K562 (cell line): ENCODE measurements at regions of chr1 and their contacts with region 1.

Region 1: DNA sequence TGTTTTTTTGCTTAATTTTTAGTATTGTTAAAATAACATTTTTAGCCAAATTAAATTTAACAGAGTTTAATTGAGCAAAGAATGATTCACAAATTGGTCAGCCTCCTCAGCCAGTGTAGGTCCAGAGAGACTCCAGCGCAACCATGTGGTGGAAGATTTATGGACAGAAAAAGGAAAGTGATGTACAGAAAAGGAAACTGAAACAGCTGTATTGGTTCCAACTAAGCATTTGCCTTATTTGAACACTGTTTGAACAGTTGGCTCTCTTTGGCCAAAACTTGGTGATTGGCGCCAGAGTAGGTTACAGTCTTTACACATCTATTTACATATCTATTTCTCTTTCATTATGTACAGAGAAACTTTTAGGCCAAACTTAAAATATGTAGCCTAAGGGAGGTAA is 19.4 kb downstream of the RPS6KC1 start:
- DNase-seq: peak in 2 of 4 experiments; percentile 49 to 75
- ATAC-seq: peak; percentile 85
- H3K4me3 ChIP-seq: no peak overlapping the region
- H3K27ac ChIP-seq: no peak overlapping the region
- H3K4me1 ChIP-seq: peaks cover 3 to 30% of the 10 kb centered on the region in 2 experiments; a peak in 3 of 5 replicates
- H3K27me3 ChIP-seq: no peaks in the 10 kb centered on the region
- CTCF ChIP-seq: peak; percentile 53 to 75 (median 59)
- EP300 ChIP-seq: no peak
- POLR2A ChIP-seq: no peak
- RAD21 ChIP-seq: peak; percentile 87 to 92

Region 2: DNA sequence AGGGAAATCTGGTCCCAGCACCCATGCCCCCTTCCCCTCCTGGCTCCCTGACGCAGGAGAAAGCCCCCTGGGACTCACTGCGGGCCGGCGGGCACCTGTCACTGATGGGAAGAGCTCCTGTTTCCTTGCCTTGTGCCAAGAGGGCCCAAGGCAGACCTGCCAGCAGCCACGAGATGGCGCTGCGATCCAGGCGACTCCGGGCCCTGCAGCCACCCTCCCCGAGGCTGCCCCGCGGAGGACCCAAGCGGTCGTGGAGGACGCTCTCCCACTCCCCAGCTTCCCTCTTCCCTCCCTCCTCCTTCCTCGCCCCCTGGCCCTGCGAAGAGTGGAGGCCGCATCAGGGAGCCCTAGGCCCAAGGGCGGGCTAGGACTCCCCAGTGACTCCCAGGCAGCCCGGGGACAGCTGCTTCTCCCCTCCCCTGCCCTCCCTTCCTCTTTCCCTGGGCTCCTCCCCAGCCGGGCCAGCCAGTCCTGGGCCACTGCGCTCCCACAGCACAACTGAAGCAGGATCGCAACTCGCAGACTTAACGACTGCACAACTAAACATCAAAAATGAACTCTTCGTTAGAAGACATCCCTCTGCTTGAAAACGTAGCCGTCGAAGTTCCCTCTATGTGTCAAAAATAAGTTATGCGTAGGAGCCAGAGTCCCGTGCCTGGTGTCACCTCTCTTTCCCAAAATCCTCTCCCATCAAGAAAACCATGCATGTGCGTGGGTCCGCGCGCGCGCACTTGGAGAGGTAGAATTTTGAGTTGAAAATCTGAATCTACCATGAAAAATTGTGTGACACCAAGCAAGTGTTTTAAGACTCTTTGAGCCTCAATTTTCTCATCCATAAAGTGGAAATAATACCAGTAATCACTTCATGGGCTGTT is 404.9 kb before region 1 on chr1:
- CTCF ChIA-PET with region 1: no interaction called
- POLR2A ChIA-PET with region 1: no interaction called
- in situ Hi-C with region 1: no loop called
- intact Hi-C with region 1: loop called (anchors 5 kb)
- DNase-seq: peak; percentile 85 to 88 (median 86)
- ATAC-seq: peak; percentile 99
- H3K4me3 ChIP-seq: peak overlapping the region; percentile 40
- H3K27ac ChIP-seq: no peak overlapping the region
- H3K4me1 ChIP-seq: peaks cover 3 to 11% of the 10 kb centered on the region in 2 experiments; a peak in 4 of 5 replicates
- H3K27me3 ChIP-seq: peaks cover 13 to 35% of the 10 kb centered on the region in 2 experiments; a peak in 4 of 5 replicates
- CTCF ChIP-seq: peak; percentile 94 to 95 (median 95)
- EP300 ChIP-seq: no peak
- POLR2A ChIP-seq: no peak
- RAD21 ChIP-seq: peak; percentile 97 to 98

Region 3: DNA sequence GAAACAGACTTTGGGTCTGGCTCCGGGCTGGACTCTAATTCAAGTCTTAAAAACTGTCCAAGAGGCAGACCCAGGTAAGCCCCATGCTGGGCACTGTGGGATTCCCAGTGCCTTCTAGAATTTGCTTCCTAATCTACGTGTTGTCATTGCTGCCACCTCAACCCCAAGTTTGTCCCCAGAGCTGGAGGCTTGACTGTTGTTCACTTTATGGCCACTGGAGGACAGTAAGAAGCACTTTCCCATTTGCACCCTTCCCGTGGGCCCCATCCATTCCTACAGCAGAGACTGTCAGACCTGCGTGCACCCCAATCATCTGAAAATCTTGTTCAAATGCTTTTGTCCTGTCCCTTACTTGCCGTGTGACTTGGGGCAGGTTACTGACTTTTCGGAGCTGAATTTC is 149.5 kb before region 1 on chr1:
- CTCF ChIA-PET with region 1: interaction called, 7 read pairs
- POLR2A ChIA-PET with region 1: no interaction called
- in situ Hi-C with region 1: no loop called
- intact Hi-C with region 1: loop called (anchors 1 kb)
- DNase-seq: peak; percentile 53 to 75 (median 72)
- ATAC-seq: peak; percentile 79
- H3K4me3 ChIP-seq: no peak overlapping the region
- H3K27ac ChIP-seq: no peak overlapping the region
- H3K4me1 ChIP-seq: peaks cover 7% of the 10 kb centered on the region in 2 experiments; a peak in 3 of 5 replicates
- H3K27me3 ChIP-seq: peaks cover 15 to 52% of the 10 kb centered on the region in 2 experiments
- CTCF ChIP-seq: peak; percentile 77 to 88 (median 84)
- EP300 ChIP-seq: no peak
- POLR2A ChIP-seq: no peak
- RAD21 ChIP-seq: peak; percentile 64 to 86

Region 4: DNA sequence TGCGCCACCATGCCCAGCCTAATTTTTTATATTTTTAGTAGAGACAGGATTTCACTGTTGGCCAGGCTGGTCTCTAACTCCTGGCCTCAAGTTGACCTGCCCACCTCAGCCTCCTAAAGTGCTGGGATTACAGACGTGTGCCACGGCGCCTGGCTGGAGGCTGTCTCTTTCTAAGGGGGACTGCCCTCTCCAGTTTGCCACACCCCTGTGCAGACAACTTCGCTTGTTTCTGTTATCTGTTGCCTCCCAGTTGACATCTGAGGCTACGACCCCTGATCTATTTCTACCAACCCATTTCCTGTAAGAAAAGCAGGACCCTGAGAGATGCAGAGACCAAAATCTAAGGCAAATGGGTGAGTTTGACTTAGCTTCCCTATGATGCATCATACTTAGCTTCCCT is 144.0 kb before region 1 on chr1:
- CTCF ChIA-PET with region 1: interaction called, 7 read pairs
- POLR2A ChIA-PET with region 1: no interaction called
- in situ Hi-C with region 1: no loop called
- intact Hi-C with region 1: loop called (anchors 1 kb)
- DNase-seq: peak in 1 of 4 experiments; percentile 29
- ATAC-seq: peak; percentile 47
- H3K4me3 ChIP-seq: no peak overlapping the region
- H3K27ac ChIP-seq: no peak overlapping the region
- H3K4me1 ChIP-seq: no peaks in the 10 kb centered on the region; a peak in 1 of 5 replicates
- H3K27me3 ChIP-seq: peaks cover 11 to 26% of the 10 kb centered on the region in 2 experiments
- CTCF ChIP-seq: no peak
- EP300 ChIP-seq: no peak
- POLR2A ChIP-seq: no peak
- RAD21 ChIP-seq: no peak

Region 5: GRCh38 chr1:212994926-212995325 is 75.5 kb before region 1 on chr1:
- CTCF ChIA-PET with region 1: no interaction called
- POLR2A ChIA-PET with region 1: no interaction called
- in situ Hi-C with region 1: no loop called
- intact Hi-C with region 1: loop called (anchors 1 kb)
- DNase-seq: no peak
- ATAC-seq: no peak
- H3K4me3 ChIP-seq: no peak overlapping the region
- H3K27ac ChIP-seq: no peak overlapping the region
- H3K4me1 ChIP-seq: no peaks in the 10 kb centered on the region
- H3K27me3 ChIP-seq: no peaks in the 10 kb centered on the region
- CTCF ChIP-seq: no peak
- EP300 ChIP-seq: no peak
- POLR2A ChIP-seq: no peak
- RAD21 ChIP-seq: no peak

Region 6: DNA sequence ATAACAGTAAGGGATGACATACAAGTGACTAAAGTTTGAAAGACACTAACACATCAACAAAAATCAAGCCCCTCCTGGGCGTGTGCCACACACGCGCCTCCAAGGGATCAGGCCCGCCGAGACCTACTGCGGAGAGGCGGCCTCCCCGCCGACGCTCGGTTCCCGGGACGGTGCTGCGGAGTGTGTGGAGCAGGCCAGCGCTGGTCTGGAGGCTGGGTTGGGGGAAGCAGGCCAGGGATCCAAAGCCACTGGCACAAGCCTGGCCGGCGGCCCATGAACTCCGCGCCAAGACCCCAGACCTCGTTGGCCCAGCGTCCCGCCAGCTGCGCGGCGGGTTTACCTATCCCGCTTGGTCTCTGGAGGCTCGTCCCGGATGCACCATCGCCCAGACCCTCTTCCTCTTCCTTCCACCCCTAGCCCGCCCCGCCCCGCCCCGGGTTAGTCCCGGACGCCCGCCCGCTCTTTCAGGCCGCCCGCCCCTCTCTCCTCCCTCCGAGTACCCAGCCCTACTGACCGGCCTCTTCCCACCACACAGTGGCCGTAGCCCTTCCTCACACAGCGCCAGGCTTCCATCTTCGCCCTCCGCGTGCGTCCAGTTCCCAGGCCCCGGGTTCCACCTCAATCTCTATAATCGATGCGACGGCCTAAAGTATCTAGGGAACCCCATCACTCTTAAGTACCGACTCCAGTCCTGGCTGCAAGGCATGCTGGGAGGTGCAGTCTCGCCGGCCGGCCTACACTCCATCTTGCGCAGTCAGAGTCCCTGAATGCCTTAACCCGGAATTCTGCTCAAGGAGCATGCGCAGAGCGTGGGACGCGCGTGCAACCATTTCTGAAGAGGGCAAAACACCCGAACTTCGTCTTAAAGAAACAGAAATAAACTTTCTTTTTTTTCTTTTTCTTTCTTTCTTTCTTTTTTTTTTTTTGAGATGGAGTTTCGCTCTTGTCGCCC is 55.0 kb before region 1 on chr1 and contains the start of gene ANGEL2:
- CTCF ChIA-PET with region 1: no interaction called
- POLR2A ChIA-PET with region 1: interaction called, 4 read pairs
- in situ Hi-C with region 1: no loop called
- intact Hi-C with region 1: loop called (anchors 1 kb)
- DNase-seq: peak; percentile 91 to 100 (median 94)
- ATAC-seq: peak; percentile 91
- H3K4me3 ChIP-seq: peak within 1 kb of the TSS; percentile 72
- H3K27ac ChIP-seq: peak within 1 kb of the TSS; percentile 65
- H3K4me1 ChIP-seq: peaks cover 15 to 22% of the 10 kb centered on the region in 2 experiments
- H3K27me3 ChIP-seq: no peaks in the 10 kb centered on the region
- CTCF ChIP-seq: no peak
- EP300 ChIP-seq: peak; percentile 22; the same call in 1 of the 2 replicates
- POLR2A ChIP-seq: peak; percentile 85
- RAD21 ChIP-seq: no peak
- polyA plus RNA-seq, gene ANGEL2: 6.8 to 10.9 TPM

Region 7: GRCh38 chr1:213051127-213051880 is 19.1 kb before region 1 on chr1 and contains the start of gene RPS6KC1:
- CTCF ChIA-PET with region 1: no interaction called
- POLR2A ChIA-PET with region 1: interaction called, 16 read pairs
- in situ Hi-C with region 1: no loop called
- intact Hi-C with region 1: loop called (anchors 2 kb)
- DNase-seq: peak; percentile 92 to 97 (median 93)
- ATAC-seq: peak; percentile 89
- H3K4me3 ChIP-seq: peak within 1 kb of the TSS; percentile 76
- H3K27ac ChIP-seq: peak within 1 kb of the TSS; percentile 92
- H3K4me1 ChIP-seq: peaks cover 33 to 71% of the 10 kb centered on the region in 2 experiments
- H3K27me3 ChIP-seq: no peaks in the 10 kb centered on the region
- CTCF ChIP-seq: no peak; a peak in 1 of 6 replicates
- EP300 ChIP-seq: peak; percentile 74
- POLR2A ChIP-seq: peak; percentile 84
- RAD21 ChIP-seq: 0 out of 4 replicates have a peak, but pooled peaks of 1 of the 2 experiments have one; percentile 19
- polyA plus RNA-seq, gene RPS6KC1: 4.3 to 7.6 TPM

Region 8: DNA sequence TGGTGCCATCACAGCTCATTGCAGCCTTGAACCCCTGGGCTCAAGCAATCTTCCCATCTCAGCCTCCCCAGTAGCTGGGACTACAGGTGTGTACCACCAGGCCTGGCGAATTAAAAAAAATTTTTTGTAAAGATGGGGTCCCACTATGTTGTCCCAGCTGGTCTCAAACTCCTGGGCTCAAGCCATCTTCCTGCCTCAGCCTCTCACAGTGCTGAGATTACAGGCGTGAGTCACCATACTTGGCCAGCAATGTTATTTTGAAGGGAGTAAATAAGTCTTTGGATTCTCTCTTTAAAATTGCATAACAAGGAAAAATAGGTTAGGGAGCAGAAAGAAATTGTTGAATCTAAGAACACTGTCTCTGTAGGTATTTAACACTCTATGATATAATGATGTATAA is 91.9 kb after region 1 on chr1:
- CTCF ChIA-PET with region 1: no interaction called
- POLR2A ChIA-PET with region 1: no interaction called
- in situ Hi-C with region 1: no loop called
- intact Hi-C with region 1: no loop called
- DNase-seq: no peak
- ATAC-seq: no peak
- H3K4me3 ChIP-seq: no peak overlapping the region
- H3K27ac ChIP-seq: no peak overlapping the region
- H3K4me1 ChIP-seq: no peaks in the 10 kb centered on the region
- H3K27me3 ChIP-seq: no peaks in the 10 kb centered on the region
- CTCF ChIP-seq: no peak
- EP300 ChIP-seq: no peak
- POLR2A ChIP-seq: no peak
- RAD21 ChIP-seq: no peak

Region 9: DNA sequence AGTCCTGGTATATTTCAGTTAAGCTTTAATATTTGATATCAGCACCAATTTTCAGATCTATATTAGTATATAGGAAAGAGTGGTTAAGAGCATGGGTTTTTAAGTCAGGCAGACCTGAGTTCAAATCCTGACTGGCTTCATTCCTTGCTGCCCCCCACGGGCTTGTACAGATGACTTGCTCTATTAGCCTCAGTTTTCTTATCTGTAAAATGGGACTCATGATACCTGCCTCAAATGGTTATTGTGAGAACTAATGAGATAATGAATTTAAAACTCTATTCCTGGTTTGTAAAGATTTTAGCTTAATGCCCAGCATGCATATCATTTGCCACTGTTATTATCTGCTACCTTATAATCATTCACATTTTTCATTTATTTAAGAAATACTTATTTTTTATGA is 245.2 kb after region 1 on chr1:
- CTCF ChIA-PET with region 1: no interaction called
- POLR2A ChIA-PET with region 1: no interaction called
- in situ Hi-C with region 1: no loop called
- intact Hi-C with region 1: no loop called
- DNase-seq: no peak
- ATAC-seq: no peak
- H3K4me3 ChIP-seq: no peak overlapping the region
- H3K27ac ChIP-seq: no peak overlapping the region
- H3K4me1 ChIP-seq: no peaks in the 10 kb centered on the region
- H3K27me3 ChIP-seq: peaks cover 5 to 12% of the 10 kb centered on the region in 2 experiments; a peak in 3 of 5 replicates
- CTCF ChIP-seq: no peak
- EP300 ChIP-seq: no peak
- POLR2A ChIP-seq: no peak
- RAD21 ChIP-seq: no peak